ENCODE measurements at regions of chr2 and their contacts with region 1.

Region 1: DNA sequence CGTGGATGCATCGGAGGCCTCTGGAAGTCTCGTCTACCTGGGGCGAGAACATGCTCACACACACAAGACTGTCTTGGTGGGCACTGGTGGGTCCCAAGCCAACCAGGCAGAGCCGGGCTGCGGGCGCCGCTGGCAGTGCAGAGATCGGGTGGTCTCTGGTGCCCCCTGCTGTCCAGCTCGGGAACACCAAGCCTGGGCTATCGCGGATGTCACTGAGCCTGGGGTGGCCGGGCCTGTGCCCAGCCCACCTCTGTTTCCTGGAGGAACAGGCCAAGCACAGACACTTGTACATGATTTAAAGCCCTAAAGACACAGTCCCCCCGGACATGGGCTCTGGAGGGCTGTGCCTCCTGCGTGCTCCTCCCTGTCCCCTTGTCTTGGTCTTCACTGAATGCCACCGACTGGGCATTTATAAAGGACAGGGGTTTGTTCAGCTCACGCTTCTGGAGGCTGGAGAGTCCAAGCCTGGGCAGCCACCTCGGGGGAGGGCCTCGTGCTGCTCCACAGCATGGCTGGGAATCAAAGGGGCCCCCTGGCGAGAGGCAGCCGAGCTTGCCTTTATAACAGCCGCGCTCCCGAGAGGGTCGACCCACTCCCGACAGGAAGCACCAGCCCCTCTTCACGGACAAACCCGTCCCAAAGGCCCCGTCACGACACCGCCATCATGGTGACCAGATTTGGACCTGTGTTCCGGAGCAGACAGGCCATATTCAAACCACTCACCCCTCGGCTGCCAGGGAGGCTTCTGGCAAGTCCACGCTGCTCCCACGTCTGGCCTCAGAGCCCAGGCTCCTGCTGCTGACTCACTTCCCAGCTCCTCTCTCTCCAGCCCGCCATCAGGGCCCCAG is 3.6 kb upstream of the OTOS start:
- DNase-seq: peak; percentile 70 to 79 (median 74)
- H3K4me3 ChIP-seq: no peak overlapping the region
- H3K4me3 Mint-ChIP-seq: peak overlapping the region in 1 of 8 donors; percentile 17
- H3K27ac ChIP-seq: no peak overlapping the region
- H3K27ac Mint-ChIP-seq: no peak overlapping the region
- H3K4me1 ChIP-seq: no peaks in the 10 kb centered on the region
- H3K4me1 Mint-ChIP-seq: peaks cover 0 to 8% (median under 1%) of the 10 kb centered on the region in 4 donors
- H3K27me3 ChIP-seq: no peaks in the 10 kb centered on the region
- H3K27me3 Mint-ChIP-seq: peaks cover 0 to 8% of the 10 kb centered on the region in 2 donors

Region 2: GRCh38 chr2:238720232-238720672 is 1423.8 kb before region 1 on chr2:
- CTCF ChIA-PET with region 1: no interaction called
- POLR2A ChIA-PET with region 1: no interaction called
- intact Hi-C with region 1: loop called (anchors 5 kb)
- DNase-seq: peak in 2 of 5 donors; percentile 11 to 14
- H3K4me3 ChIP-seq: no peak overlapping the region
- H3K4me3 Mint-ChIP-seq: no peak overlapping the region
- H3K27ac ChIP-seq: no peak overlapping the region
- H3K27ac Mint-ChIP-seq: no peak overlapping the region
- H3K4me1 ChIP-seq: no peaks in the 10 kb centered on the region
- H3K4me1 Mint-ChIP-seq: no peaks in the 10 kb centered on the region
- H3K27me3 ChIP-seq: no peaks in the 10 kb centered on the region
- H3K27me3 Mint-ChIP-seq: peaks cover 9 to 20% of the 10 kb centered on the region in 2 donors

Region 3: GRCh38 chr2:239035361-239036078 is 1108.5 kb before region 1 on chr2:
- CTCF ChIA-PET with region 1: interaction called, 4 read pairs
- POLR2A ChIA-PET with region 1: no interaction called
- intact Hi-C with region 1: loop called (anchors 5 kb)
- DNase-seq: peak; percentile 46 to 63 (median 54)
- H3K4me3 ChIP-seq: no peak overlapping the region
- H3K4me3 Mint-ChIP-seq: no peak overlapping the region
- H3K27ac ChIP-seq: no peak overlapping the region
- H3K27ac Mint-ChIP-seq: no peak overlapping the region
- H3K4me1 ChIP-seq: no peaks in the 10 kb centered on the region
- H3K4me1 Mint-ChIP-seq: no peaks in the 10 kb centered on the region
- H3K27me3 ChIP-seq: no peaks in the 10 kb centered on the region
- H3K27me3 Mint-ChIP-seq: peaks cover 3 to 8% of the 10 kb centered on the region in 2 donors

Region 4: GRCh38 chr2:239934571-239935171 is 209.4 kb before region 1 on chr2:
- CTCF ChIA-PET with region 1: interaction called, 3 read pairs
- POLR2A ChIA-PET with region 1: interaction called, 3 read pairs
- intact Hi-C with region 1: loop called (anchors 5 kb)
- DNase-seq: peak; percentile 51 to 59 (median 54)
- H3K4me3 ChIP-seq: no peak overlapping the region
- H3K4me3 Mint-ChIP-seq: peak overlapping the region in 5 of 8 donors; percentile 4 to 63 (median 52)
- H3K27ac ChIP-seq: no peak overlapping the region
- H3K27ac Mint-ChIP-seq: peak overlapping the region in 4 of 7 donors; percentile 41 to 83 (median 62)
- H3K4me1 ChIP-seq: no peaks in the 10 kb centered on the region
- H3K4me1 Mint-ChIP-seq: peaks cover 5 to 10% (median 6%) of the 10 kb centered on the region in 4 donors
- H3K27me3 ChIP-seq: no peaks in the 10 kb centered on the region
- H3K27me3 Mint-ChIP-seq: no peaks in the 10 kb centered on the region

Region 5: GRCh38 chr2:240060977-240061591 is 82.9 kb before region 1 on chr2:
- CTCF ChIA-PET with region 1: interaction called, 149 read pairs
- POLR2A ChIA-PET with region 1: interaction called, 3 read pairs
- intact Hi-C with region 1: no loop called
- DNase-seq: peak; percentile 45 to 62 (median 55)
- H3K4me3 ChIP-seq: no peak overlapping the region
- H3K4me3 Mint-ChIP-seq: no peak overlapping the region
- H3K27ac ChIP-seq: no peak overlapping the region
- H3K27ac Mint-ChIP-seq: no peak overlapping the region
- H3K4me1 ChIP-seq: no peaks in the 10 kb centered on the region
- H3K4me1 Mint-ChIP-seq: no peaks in the 10 kb centered on the region
- H3K27me3 ChIP-seq: no peaks in the 10 kb centered on the region
- H3K27me3 Mint-ChIP-seq: peaks cover 9 to 30% of the 10 kb centered on the region in 2 donors

Measured in CD4-positive, alpha-beta memory T cell (primary cell).